ENCODE measurements at regions of chr7 and their contacts with region 1.

Region 1: DNA sequence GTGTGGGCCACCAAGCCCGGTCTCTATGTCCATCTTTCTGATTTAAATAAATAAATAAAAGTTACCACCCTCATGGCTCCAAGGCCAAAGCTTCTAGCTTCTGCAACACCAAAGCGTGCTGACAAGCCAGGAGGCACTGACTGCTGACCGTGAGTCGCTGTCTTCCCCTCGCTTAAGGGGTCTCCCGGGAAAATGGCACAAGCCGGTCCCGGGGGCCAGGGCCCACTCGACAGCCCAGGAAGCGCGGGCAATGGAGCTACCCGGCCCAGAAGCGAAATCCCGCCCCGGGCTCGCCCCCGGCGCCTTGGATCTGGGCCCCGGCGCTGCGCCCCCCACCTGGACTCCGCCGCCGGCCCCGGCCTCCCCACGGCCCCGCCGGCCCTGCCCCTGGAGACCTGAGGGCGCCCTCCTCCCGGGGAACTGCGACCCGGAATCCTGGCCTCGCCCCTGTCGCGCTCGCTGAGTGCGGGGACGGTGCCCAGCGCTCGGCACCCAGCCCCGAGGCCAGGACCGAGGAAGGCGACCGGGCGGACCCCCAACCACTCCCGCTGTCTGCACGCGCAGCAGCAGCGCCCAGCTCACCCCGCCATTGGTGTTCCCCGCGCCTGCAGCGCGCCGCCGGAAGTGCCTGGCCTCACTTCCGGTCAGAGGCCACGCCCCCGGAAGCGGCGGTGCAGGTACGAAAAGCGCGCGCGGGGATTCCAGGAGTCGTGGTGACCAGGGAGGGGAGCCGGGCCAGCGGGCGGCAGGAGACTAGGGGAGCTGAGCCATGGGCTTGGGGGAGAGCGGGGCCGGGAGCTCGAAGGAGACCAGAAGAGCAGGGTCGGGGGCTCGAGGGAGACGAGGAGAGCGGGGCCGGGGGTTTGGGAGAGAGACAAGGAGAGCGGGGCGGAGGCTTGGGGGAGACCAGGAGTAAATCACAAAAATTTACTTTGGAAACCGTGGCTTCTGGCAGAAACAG is at the starts of genes MRM2 and NUDT1:
- DNase-seq: peak; percentile 90 to 91 (median 90)
- ATAC-seq: peak; percentile 96
- H3K4me3 ChIP-seq: peak within 1 kb of the TSS; percentile 94
- H3K4me1 ChIP-seq: peaks cover 16% of the 10 kb centered on the region
- CTCF ChIP-seq: no peak
- total RNA-seq, gene MRM2: 16.5 to 18.8 (median 17.2) TPM
- total RNA-seq, gene NUDT1: 6.8 to 20.3 (median 12.4) TPM

Region 2: DNA sequence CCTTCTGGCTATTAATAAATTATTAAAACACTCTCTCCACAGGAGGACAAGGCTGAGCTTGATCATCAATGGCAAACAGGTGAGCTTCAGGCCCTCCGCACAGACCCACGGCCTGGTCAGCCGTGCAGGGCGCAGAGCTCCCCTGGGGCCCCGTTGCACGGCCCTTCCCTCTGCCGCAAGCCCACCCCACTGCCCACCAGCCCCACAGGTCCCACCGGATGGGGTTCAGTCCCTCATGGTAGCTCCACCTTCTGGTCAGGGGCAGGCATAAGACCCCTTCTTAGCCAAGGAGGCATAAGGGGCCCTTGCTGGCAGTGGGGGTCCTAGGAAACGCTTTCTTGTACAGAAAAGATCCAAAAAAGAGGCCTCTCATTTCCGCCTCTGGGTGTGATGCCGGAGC is 93.7 kb before region 1 on chr7:
- intact Hi-C with region 1: no loop called
- DNase-seq: peak in 1 of 3 donors; percentile 10
- ATAC-seq: no peak
- H3K4me3 ChIP-seq: no peak overlapping the region
- H3K4me1 ChIP-seq: no peaks in the 10 kb centered on the region
- CTCF ChIP-seq: no peak

Region 3: DNA sequence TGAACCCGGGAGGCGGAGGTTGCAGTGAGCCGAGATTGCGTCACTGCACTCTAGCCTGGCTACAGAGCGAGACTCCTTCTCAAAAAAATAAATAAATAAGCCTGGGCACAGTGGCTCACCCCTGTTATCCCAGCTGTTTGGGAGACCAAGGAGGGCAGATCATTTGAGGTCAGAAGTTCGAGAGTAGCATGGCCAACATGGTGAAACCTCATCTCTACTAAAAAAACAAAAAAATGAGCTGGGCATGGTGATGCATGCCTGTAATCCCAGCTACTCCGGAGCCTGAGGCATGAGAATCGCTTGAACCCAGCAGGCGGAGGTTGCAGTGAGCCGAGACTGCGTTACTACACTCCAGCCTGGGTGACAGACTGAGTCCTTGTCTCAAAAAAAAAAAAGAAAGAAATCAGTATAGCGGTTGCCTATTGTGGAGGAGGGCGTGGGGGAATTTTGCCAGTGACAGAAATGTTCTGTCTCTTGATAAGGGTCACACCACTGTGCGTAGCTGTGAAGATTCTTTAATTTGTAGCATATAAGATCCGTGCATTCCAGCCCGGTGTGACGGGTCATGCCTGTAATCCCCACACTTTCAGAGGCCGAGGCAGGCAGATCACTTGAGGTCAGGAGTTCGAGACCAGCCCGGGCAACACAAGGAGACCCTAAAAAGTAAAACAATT is 94.9 kb after region 1 on chr7:
- intact Hi-C with region 1: loop called (anchors 5 to 10 kb)
- DNase-seq: no peak
- ATAC-seq: no peak
- H3K4me3 ChIP-seq: no peak overlapping the region
- H3K4me1 ChIP-seq: no peaks in the 10 kb centered on the region
- CTCF ChIP-seq: no peak

Region 4: GRCh38 chr7:2354186-2354938 is 112.5 kb after region 1 on chr7 and contains the start of gene EIF3B:
- intact Hi-C with region 1: loop called in 1 of 2 experiments (anchors 10 kb)
- DNase-seq: peak; percentile 90 to 93 (median 91)
- ATAC-seq: peak; percentile 93
- H3K4me3 ChIP-seq: peak within 1 kb of the TSS; percentile 94
- H3K4me1 ChIP-seq: peaks cover 28% of the 10 kb centered on the region
- CTCF ChIP-seq: no peak
- total RNA-seq, gene EIF3B: 91.6 to 127 (median 110) TPM

Measured in mucosa of descending colon (tissue), 3 donors.